ENCODE measurements at regions of chr5 and their contacts with region 1.

Region 1: GRCh38 chr5:78829811-78830527 is 155.1 kb downstream of the ARSB start:
- DNase-seq: no peak
- ATAC-seq: no peak
- H3K4me3 ChIP-seq: no peak overlapping the region
- H3K4me3 Mint-ChIP-seq: no peak overlapping the region
- H3K27ac ChIP-seq: no peak overlapping the region
- H3K27ac Mint-ChIP-seq: peak overlapping the region; percentile 46
- H3K4me1 ChIP-seq: peaks cover 24 to 33% of the 10 kb centered on the region in 2 donors
- H3K4me1 Mint-ChIP-seq: peaks cover 35% of the 10 kb centered on the region
- H3K27me3 ChIP-seq: no peaks in the 10 kb centered on the region
- H3K27me3 Mint-ChIP-seq: no peaks in the 10 kb centered on the region
- CTCF ChIP-seq: no peak

Region 2: GRCh38 chr5:78328585-78329173 is 501.3 kb before region 1 on chr5:
- CTCF ChIA-PET with region 1: no interaction called
- POLR2A ChIA-PET with region 1: no interaction called
- intact Hi-C with region 1: no loop called
- DNase-seq: no peak
- ATAC-seq: no peak
- H3K4me3 ChIP-seq: no peak overlapping the region
- H3K4me3 Mint-ChIP-seq: no peak overlapping the region
- H3K27ac ChIP-seq: no peak overlapping the region
- H3K27ac Mint-ChIP-seq: no peak overlapping the region
- H3K4me1 ChIP-seq: no peaks in the 10 kb centered on the region
- H3K4me1 Mint-ChIP-seq: no peaks in the 10 kb centered on the region
- H3K27me3 ChIP-seq: no peaks in the 10 kb centered on the region
- H3K27me3 Mint-ChIP-seq: peaks cover 17% of the 10 kb centered on the region
- CTCF ChIP-seq: no peak

Region 3: DNA sequence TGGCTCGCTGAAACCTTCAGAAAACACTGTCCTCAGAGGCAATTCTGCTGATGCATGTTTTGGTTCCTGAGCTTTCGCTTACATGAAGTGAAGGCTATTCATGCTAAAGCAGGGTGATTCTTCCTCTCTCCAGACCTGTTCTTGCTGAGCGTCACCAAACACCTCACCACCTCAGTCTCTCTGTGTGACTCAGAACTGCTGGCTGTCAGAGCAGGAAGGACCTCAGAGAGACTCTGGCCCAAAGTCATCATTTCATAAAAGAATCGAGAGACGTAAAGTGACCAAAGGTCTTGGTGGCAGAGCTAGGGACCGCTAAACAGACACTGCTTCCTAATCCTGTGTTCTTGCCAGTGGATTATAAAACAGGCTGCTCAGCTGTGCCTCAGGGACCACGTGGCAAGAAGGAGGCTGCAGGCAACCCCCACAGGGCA is 255.2 kb before region 1 on chr5:
- CTCF ChIA-PET with region 1: no interaction called
- POLR2A ChIA-PET with region 1: no interaction called
- intact Hi-C with region 1: loop called (anchors 10 kb)
- DNase-seq: peak; percentile 22
- ATAC-seq: peak; percentile 55
- H3K4me3 ChIP-seq: no peak overlapping the region
- H3K4me3 Mint-ChIP-seq: peak overlapping the region; percentile 26
- H3K27ac ChIP-seq: peak overlapping the region in 1 of 2 donors; percentile 52
- H3K27ac Mint-ChIP-seq: peak overlapping the region; percentile 58
- H3K4me1 ChIP-seq: peaks cover 22 to 25% of the 10 kb centered on the region in 2 donors
- H3K4me1 Mint-ChIP-seq: peaks cover 27% of the 10 kb centered on the region
- H3K27me3 ChIP-seq: no peaks in the 10 kb centered on the region
- H3K27me3 Mint-ChIP-seq: no peaks in the 10 kb centered on the region
- CTCF ChIP-seq: no peak

Region 4: DNA sequence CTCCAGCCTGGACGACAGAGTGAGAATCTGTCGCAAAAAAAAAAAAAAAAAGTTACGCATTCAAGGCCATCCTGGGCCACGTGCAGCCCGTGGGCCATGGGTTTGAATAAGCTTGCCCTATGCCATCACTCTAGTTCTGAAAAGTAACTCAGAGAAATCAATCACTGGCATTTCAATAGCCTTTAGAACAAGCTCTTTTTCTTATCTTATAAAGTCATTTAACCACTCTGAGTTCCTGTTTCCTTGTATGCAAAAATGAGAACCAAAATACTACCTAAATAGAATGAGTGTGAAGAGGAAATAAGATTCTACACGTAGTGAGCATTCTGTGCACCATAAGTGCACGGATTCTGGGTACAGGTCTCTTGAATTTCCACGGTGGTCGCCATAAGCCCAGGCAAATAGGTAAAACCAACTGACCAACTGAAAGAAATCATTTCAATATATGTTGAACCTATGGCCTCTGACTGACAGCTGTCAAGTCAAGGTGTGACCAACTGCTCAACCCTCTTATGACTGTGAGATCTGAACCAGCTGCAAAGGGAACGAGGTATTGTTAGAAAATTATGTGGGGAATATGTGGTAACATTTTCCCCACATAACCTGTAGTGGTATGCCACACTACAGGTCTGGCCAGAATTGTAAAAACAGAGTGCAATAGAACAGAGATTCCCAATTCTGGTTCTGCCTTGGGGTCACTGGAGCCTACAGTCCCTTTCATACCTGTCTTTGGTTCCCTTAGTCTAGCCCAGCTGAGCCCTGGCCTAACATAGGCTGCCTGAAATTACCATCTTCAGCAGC is 37.4 kb before region 1 on chr5:
- CTCF ChIA-PET with region 1: no interaction called
- POLR2A ChIA-PET with region 1: no interaction called
- intact Hi-C with region 1: loop called (anchors 5 kb)
- DNase-seq: peak; percentile 51
- ATAC-seq: peak; percentile 65
- H3K4me3 ChIP-seq: peak overlapping the region in 1 of 5 experiments; percentile 38
- H3K4me3 Mint-ChIP-seq: peak overlapping the region; percentile 55
- H3K27ac ChIP-seq: peak overlapping the region; percentile 25 to 37
- H3K27ac Mint-ChIP-seq: peak overlapping the region; percentile 62
- H3K4me1 ChIP-seq: peaks cover 33 to 37% of the 10 kb centered on the region in 2 donors
- H3K4me1 Mint-ChIP-seq: peaks cover 68% of the 10 kb centered on the region
- H3K27me3 ChIP-seq: no peaks in the 10 kb centered on the region
- H3K27me3 Mint-ChIP-seq: no peaks in the 10 kb centered on the region
- CTCF ChIP-seq: no peak

Measured in B cell (primary cell).